Activated naive CD4-positive, alpha-beta T cell treated with anti-CD3 and anti-CD28 coated beads for 36 hours (primary cell): ENCODE measurements at regions of chr17 and their contacts with region 1.

Region 1: DNA sequence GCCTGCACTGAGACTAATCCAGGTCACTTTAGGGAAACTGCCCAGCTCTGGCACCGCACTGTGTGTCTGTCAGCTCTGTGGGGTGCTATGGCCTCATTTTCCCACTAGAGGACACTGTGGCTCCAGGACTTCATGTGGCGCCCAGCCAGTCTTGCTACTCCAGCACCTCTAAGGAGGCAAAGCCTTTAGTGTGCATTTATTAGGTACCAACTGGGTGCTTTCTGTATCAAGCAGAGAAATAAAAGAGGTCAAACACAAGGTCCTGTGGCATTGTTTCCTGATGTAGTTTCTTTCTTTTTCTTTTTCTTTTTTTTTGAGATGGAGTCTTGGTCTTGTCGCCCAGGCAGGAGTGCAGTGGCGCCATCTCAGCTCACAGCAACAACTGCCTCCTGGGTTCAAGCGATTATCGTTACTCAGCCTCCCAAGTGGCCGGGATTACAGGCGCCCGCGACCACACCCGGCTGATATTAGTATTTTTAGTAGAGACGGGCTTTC is 12.5 kb upstream of the RHBDL3 start:
- DNase-seq: peak; percentile 89
- H3K4me3 Mint-ChIP-seq: no peak overlapping the region
- H3K27ac Mint-ChIP-seq: no peak overlapping the region
- H3K4me1 Mint-ChIP-seq: no peaks in the 10 kb centered on the region
- H3K27me3 Mint-ChIP-seq: peaks cover 3% of the 10 kb centered on the region

Region 2: DNA sequence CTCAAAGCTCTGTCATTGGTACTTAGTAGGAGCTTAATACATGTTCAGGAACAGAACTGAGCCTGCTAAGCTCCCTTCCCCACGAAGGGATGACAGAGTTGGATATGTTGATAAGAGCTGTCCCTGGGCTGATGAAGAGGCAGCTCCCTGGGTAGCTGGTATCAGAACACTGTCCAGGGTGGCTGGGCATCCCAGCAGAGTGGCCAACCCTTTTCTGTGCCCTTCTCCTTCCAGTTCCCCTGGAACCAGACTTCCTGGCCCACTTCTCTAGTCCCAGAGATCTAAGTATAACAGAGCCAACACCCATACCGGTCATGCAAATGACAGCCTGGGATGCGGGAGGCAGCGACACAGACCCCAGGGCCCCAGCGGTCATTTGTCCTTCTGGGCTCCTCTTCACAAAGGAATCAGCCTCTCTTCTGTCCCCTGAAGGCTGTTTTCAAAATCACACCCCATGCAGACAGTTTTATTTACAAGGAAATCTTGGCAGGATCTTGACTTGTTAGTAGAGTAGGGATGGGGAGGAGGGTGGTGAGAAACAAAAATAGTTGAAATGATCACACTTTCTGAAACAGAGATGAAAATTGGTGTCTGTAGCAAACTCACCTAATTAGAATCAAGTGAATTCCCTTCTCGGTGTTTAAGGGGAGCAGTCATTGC is 11.1 kb after region 1 on chr17:
- CTCF ChIA-PET with region 1: interaction called, 14 read pairs
- intact Hi-C with region 1: no loop called
- DNase-seq: no peak
- H3K4me3 Mint-ChIP-seq: peak overlapping the region; percentile 11
- H3K27ac Mint-ChIP-seq: no peak overlapping the region
- H3K4me1 Mint-ChIP-seq: peaks cover 13% of the 10 kb centered on the region
- H3K27me3 Mint-ChIP-seq: peaks cover 52% of the 10 kb centered on the region

Region 3: DNA sequence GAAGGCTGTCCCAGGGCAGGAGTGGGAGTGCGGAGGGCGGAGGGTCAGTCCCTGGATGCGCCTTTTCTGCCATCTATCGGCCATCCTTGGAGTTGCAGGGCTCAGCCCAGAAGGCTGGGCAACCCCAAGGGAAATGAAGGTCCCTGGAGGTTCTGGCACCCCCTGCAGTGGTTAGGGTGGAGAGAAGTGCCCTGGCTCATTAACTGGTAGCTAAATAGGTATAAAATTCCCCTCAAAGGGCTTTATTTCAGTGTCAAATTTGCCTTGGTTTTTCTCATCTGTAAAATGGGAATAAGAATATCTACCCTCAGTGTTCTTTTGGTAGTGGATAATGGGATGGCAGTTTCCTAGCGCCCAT is 66.4 kb after region 1 on chr17:
- CTCF ChIA-PET with region 1: interaction called, 72 read pairs
- intact Hi-C with region 1: loop called (anchors 1 kb)
- DNase-seq: peak; percentile 87
- H3K4me3 Mint-ChIP-seq: peak overlapping the region; percentile 61
- H3K27ac Mint-ChIP-seq: no peak overlapping the region
- H3K4me1 Mint-ChIP-seq: peaks cover 17% of the 10 kb centered on the region
- H3K27me3 Mint-ChIP-seq: peaks cover 6% of the 10 kb centered on the region

Region 4: GRCh38 chr17:32461853-32462617 is 208.9 kb after region 1 on chr17:
- CTCF ChIA-PET with region 1: no interaction called
- intact Hi-C with region 1: loop called (anchors 5 kb)
- DNase-seq: peak; percentile 83
- H3K4me3 Mint-ChIP-seq: no peak overlapping the region
- H3K27ac Mint-ChIP-seq: peak overlapping the region; percentile 72
- H3K4me1 Mint-ChIP-seq: peaks cover 37% of the 10 kb centered on the region
- H3K27me3 Mint-ChIP-seq: no peaks in the 10 kb centered on the region

Region 5: DNA sequence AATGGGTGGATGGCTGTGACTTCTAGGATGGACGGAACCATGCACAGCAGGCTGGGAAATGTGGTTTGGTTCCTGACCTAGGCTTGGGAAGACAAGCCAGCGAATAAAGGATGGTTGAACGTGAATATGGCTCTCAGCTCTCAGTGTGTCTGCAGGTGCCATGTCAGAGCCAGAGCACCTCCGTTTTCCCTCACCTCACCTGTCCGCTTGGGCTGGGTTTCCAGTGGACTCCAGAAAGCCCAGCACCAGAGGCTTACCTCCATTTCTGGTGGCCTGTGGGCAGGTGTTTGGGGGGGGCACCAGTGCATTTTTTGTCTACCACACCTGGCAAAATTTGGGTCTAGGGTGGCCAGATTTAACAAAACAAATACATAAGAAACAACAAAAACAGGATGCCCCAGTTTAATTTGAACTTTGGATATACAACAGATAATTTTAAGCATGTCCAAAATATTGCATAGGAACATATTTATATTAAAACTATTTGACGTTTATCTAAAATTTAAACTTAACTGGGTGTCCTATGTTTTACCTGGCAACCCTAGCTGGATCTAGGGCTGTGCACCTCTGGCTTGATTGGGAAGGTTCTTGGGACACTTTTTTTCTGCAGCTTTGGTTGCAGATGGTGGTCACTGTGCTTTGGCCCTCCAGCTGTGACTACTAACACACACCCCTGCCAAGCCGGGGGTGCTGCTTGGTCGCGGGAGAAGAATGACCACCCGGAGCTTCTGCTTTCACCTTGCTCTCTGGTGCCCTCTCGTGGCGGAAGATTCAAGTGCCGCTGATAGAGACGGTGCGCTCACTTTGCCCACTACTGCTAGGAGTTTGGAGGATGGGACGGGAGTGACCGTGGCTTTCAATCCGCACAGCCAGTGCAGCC is 744.8 kb after region 1 on chr17:
- CTCF ChIA-PET with region 1: no interaction called
- intact Hi-C with region 1: loop called (anchors 5 kb)
- DNase-seq: peak; percentile 83
- H3K4me3 Mint-ChIP-seq: no peak overlapping the region
- H3K27ac Mint-ChIP-seq: no peak overlapping the region
- H3K4me1 Mint-ChIP-seq: peaks cover 4% of the 10 kb centered on the region
- H3K27me3 Mint-ChIP-seq: peaks cover 18% of the 10 kb centered on the region